GM12878 (cell line): ENCODE measurements at regions of chr12 and their contacts with region 1.

Region 1: DNA sequence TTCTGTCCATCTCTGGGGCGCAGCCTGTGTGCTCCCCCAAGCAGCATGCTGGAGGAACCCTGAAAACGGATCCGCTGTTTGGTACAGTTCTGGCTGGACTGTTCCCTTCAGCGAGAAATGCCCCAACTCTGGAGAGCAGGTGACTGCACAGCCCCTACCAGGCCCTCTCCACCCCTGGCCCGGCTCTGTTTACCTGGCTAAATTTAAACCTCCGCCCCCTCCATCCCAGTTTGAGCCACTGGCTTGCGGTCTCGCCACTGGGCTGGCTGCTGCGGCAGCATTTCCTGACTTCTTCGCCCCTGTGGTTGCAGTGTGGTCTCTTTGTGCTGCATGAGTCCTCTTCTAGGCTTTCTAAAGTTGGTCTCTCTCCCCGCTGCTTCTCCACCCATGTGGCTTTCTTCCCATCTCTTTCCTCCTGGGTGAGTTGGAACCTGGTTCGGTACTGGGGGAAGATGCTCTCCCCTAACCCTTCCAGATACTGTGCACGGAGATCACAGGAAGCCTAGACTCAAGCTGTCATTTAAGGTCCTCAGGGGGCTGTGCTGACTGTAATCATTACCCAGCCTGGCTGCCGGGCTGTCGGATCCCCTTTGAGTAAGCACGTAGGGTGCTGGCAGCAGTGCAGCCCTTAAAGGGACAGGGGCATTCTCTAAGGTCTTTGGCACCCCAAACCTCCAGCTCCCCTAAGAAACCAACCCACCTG is 60.6 kb downstream of the FBXL14 start:
- DNase-seq: peak; percentile 77
- ATAC-seq: peak; percentile 80
- H3K4me3 ChIP-seq: peak overlapping the region; percentile 66
- H3K27ac ChIP-seq: peak overlapping the region; percentile 81
- H3K4me1 ChIP-seq: peaks cover 37% of the 10 kb centered on the region
- H3K27me3 ChIP-seq: peaks cover 0 to 5% of the 10 kb centered on the region in 2 experiments; a peak in 1 of 4 replicates
- CTCF ChIP-seq: no peak
- EP300 ChIP-seq: peak; percentile 54 to 58; a peak in 3 of 4 replicates
- POLR2A ChIP-seq: no peak
- RAD21 ChIP-seq: no peak

Region 2: GRCh38 chr12:1220127-1221092 is 313.3 kb before region 1 on chr12:
- CTCF ChIA-PET with region 1: no interaction called
- POLR2A ChIA-PET with region 1: no interaction called
- RAD21 ChIA-PET with region 1: no interaction called
- SMC1A ChIA-PET with region 1: no interaction called
- in situ Hi-C with region 1: no loop called
- intact Hi-C with region 1: no loop called
- DNase-seq: no peak
- ATAC-seq: no peak
- H3K4me3 ChIP-seq: no peak overlapping the region
- H3K27ac ChIP-seq: no peak overlapping the region
- H3K4me1 ChIP-seq: no peaks in the 10 kb centered on the region
- H3K27me3 ChIP-seq: no peaks in the 10 kb centered on the region
- CTCF ChIP-seq: no peak
- EP300 ChIP-seq: no peak
- POLR2A ChIP-seq: no peak
- RAD21 ChIP-seq: no peak

Region 3: GRCh38 chr12:1422604-1423315 is 111.0 kb before region 1 on chr12:
- CTCF ChIA-PET with region 1: no interaction called
- POLR2A ChIA-PET with region 1: interaction called, 3 read pairs
- RAD21 ChIA-PET with region 1: interaction called, 4 read pairs
- SMC1A ChIA-PET with region 1: interaction called, 6 read pairs
- in situ Hi-C with region 1: no loop called
- intact Hi-C with region 1: loop called (anchors 5 kb)
- DNase-seq: peak; percentile 83
- ATAC-seq: peak; percentile 98
- H3K4me3 ChIP-seq: no peak overlapping the region
- H3K27ac ChIP-seq: peak overlapping the region; percentile 75
- H3K4me1 ChIP-seq: no peaks in the 10 kb centered on the region
- H3K27me3 ChIP-seq: no peaks in the 10 kb centered on the region
- CTCF ChIP-seq: no peak
- EP300 ChIP-seq: peak; percentile 46 to 57; a peak in 3 of 4 replicates
- POLR2A ChIP-seq: no peak
- RAD21 ChIP-seq: no peak

Region 4: DNA sequence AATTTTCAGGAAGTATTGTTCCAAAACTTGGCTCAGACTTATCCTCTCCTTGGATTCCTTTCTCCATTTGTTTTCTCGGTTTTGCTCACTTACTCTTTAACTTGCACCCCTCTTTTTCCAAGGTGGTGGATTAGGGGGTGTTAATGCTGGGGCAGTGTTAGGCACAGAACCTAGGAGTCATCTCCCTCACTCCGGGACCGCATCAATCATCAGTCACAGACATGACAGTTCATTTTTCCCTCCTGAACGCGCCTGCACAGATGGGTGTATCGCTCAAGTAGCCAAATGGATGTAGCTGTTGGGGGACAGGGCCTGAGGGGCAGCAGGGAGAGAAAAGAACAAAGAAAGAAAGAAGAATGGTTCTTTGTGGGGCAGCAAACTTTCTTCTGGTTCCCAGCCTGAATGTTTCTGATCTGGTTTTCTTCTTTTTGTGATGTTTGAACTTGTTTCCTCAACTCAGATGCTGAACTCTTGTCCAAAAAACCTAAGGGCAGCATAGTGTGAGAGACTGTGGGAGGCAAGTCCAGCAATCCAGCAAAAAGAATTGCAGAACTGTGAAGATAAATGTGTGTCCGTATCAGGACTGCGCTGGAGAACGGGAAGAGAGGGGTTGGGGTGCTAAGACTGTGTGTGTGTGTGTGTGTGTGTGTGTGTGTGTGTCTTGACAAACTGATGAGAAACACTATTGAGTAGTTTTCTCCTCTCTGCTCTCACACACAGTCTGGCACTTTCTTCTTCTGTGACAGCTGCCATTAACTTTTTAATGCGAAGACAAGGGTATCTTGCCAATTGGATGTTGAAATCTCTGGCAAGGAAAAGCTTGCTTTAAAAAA is 70.5 kb before region 1 on chr12:
- CTCF ChIA-PET with region 1: no interaction called
- POLR2A ChIA-PET with region 1: no interaction called
- RAD21 ChIA-PET with region 1: no interaction called
- SMC1A ChIA-PET with region 1: no interaction called
- in situ Hi-C with region 1: no loop called
- intact Hi-C with region 1: no loop called
- DNase-seq: no peak
- ATAC-seq: no peak
- H3K4me3 ChIP-seq: no peak overlapping the region
- H3K27ac ChIP-seq: no peak overlapping the region
- H3K4me1 ChIP-seq: no peaks in the 10 kb centered on the region
- H3K27me3 ChIP-seq: no peaks in the 10 kb centered on the region
- CTCF ChIP-seq: no peak
- EP300 ChIP-seq: no peak
- POLR2A ChIP-seq: no peak
- RAD21 ChIP-seq: no peak

Region 5: GRCh38 chr12:1517007-1517406 is 16.7 kb before region 1 on chr12:
- CTCF ChIA-PET with region 1: interaction called, 14 read pairs
- POLR2A ChIA-PET with region 1: no interaction called
- RAD21 ChIA-PET with region 1: interaction called, 10 read pairs
- SMC1A ChIA-PET with region 1: interaction called, 6 read pairs
- in situ Hi-C with region 1: no loop called
- intact Hi-C with region 1: no loop called
- DNase-seq: no peak
- ATAC-seq: peak; percentile 83
- H3K4me3 ChIP-seq: no peak overlapping the region
- H3K27ac ChIP-seq: no peak overlapping the region
- H3K4me1 ChIP-seq: no peaks in the 10 kb centered on the region
- H3K27me3 ChIP-seq: no peaks in the 10 kb centered on the region
- CTCF ChIP-seq: peak; percentile 50 to 78 (median 71)
- EP300 ChIP-seq: no peak
- POLR2A ChIP-seq: no peak
- RAD21 ChIP-seq: peak; percentile 69

Region 6: DNA sequence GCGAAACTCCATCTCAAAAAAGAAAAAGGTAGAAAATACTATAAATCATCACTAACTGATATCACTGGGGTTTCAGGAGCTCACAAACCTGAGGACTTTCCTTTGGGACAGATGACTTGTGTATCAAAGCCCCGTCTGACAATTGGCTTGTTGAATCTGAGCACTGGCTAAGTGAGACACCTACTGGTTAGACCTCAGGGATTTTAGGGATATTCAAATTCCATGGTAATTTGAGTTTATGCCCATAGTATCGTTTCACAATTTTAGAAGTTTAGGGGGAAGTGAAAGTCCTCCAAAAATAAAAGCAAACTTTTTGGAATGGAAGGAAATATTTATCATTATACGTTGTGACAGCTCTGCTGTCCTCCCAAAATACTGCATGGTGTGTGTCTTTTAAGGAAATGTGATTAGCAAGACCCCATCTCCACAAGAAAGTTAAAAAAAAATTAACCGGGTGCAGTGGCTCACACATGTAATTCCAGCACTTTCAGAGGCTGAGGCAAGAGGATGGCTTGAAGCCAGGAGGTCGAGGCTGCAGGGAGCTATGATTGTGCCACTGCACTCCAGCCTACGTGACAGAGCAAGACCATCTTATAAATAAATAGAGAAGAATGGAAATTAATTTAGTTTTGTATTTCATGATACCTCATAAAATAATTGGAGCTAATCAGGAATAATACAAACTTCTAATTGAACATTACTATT is 11.4 kb after region 1 on chr12:
- CTCF ChIA-PET with region 1: interaction called, 6 read pairs
- POLR2A ChIA-PET with region 1: interaction called, 9 read pairs
- RAD21 ChIA-PET with region 1: interaction called, 3 read pairs
- SMC1A ChIA-PET with region 1: interaction called, 45 read pairs
- in situ Hi-C with region 1: no loop called
- intact Hi-C with region 1: no loop called
- DNase-seq: no peak
- ATAC-seq: no peak
- H3K4me3 ChIP-seq: no peak overlapping the region
- H3K27ac ChIP-seq: no peak overlapping the region
- H3K4me1 ChIP-seq: peaks cover 15% of the 10 kb centered on the region; the same call in 1 of the 2 replicates
- H3K27me3 ChIP-seq: no peaks in the 10 kb centered on the region
- CTCF ChIP-seq: peak in 1 of 3 experiments; percentile 11; a peak in 1 of 6 replicates
- EP300 ChIP-seq: no peak
- POLR2A ChIP-seq: no peak
- RAD21 ChIP-seq: peak; percentile 30; the same call in 1 of the 2 replicates

Region 7: DNA sequence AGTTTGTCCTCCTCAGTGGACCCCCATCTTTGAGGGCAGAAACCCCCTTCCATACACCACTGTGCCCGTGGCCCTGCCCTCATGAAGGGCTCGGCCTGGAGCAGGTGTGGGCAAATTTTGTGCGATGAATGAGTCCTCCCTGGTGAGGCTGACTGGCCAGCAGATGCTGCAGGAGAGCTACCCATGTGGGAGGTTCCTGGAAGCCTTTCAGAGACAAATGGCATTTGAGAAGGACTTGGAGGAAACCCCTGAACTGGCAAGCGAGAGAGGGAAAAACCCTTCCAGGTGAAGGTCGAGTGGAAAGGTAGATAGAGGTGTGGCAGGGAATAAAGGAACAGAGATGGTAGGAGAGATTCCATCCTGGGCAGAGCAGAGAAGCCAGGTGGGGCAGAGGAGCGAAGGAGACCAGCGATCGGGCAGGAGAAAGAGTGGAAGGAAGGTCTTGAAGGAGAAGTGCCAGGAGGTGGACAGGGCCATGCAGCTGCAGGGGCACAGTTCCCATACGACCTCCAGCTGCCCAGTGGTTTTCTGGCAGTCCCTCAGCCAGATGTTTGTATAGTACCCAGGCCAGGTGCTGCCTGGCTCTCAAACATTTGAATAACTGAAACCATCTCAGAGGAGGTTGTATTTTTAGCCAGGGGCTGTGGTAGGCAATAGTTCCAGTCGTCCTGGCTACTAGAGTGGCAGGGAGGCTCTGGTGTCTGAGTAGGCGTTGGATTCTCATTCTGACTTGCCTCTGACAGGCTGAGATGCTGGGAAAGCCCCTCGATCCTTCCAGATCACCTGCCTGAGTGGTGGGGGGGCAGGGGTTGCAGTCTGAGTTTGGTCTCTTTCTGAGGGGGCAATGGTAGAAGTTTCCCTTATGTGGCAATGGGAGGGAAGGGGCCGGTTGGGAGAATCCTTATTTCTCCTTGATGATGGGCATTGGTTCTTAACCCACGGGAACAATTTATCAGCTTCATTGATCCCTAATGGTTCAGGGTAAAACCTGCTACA is 20.5 kb after region 1 on chr12:
- CTCF ChIA-PET with region 1: interaction called, 28 read pairs
- POLR2A ChIA-PET with region 1: interaction called, 43 read pairs
- RAD21 ChIA-PET with region 1: interaction called, 43 read pairs
- SMC1A ChIA-PET with region 1: interaction called, 20 read pairs
- in situ Hi-C with region 1: no loop called
- intact Hi-C with region 1: loop called (anchors 1 kb)
- DNase-seq: peak; percentile 94
- ATAC-seq: peak; percentile 96
- H3K4me3 ChIP-seq: peak overlapping the region; percentile 24; the same call in 1 of the 2 replicates
- H3K27ac ChIP-seq: peak overlapping the region; percentile 82
- H3K4me1 ChIP-seq: peaks cover 20% of the 10 kb centered on the region
- H3K27me3 ChIP-seq: no peaks in the 10 kb centered on the region
- CTCF ChIP-seq: peak in 1 of 3 experiments; percentile 6; a peak in 1 of 6 replicates
- EP300 ChIP-seq: peak; percentile 94 to 96
- POLR2A ChIP-seq: peak; percentile 45; the same call in 1 of the 2 replicates
- RAD21 ChIP-seq: peak; percentile 25

Region 8: GRCh38 chr12:1576410-1577241 is 42.9 kb after region 1 on chr12:
- CTCF ChIA-PET with region 1: interaction called, 55 read pairs
- POLR2A ChIA-PET with region 1: interaction called, 4 read pairs
- RAD21 ChIA-PET with region 1: interaction called, 55 read pairs
- SMC1A ChIA-PET with region 1: interaction called, 56 read pairs
- in situ Hi-C with region 1: no loop called
- intact Hi-C with region 1: no loop called
- DNase-seq: no peak
- ATAC-seq: no peak
- H3K4me3 ChIP-seq: no peak overlapping the region
- H3K27ac ChIP-seq: no peak overlapping the region
- H3K4me1 ChIP-seq: no peaks in the 10 kb centered on the region
- H3K27me3 ChIP-seq: no peaks in the 10 kb centered on the region
- CTCF ChIP-seq: no peak
- EP300 ChIP-seq: no peak
- POLR2A ChIP-seq: no peak
- RAD21 ChIP-seq: no peak

Region 9: DNA sequence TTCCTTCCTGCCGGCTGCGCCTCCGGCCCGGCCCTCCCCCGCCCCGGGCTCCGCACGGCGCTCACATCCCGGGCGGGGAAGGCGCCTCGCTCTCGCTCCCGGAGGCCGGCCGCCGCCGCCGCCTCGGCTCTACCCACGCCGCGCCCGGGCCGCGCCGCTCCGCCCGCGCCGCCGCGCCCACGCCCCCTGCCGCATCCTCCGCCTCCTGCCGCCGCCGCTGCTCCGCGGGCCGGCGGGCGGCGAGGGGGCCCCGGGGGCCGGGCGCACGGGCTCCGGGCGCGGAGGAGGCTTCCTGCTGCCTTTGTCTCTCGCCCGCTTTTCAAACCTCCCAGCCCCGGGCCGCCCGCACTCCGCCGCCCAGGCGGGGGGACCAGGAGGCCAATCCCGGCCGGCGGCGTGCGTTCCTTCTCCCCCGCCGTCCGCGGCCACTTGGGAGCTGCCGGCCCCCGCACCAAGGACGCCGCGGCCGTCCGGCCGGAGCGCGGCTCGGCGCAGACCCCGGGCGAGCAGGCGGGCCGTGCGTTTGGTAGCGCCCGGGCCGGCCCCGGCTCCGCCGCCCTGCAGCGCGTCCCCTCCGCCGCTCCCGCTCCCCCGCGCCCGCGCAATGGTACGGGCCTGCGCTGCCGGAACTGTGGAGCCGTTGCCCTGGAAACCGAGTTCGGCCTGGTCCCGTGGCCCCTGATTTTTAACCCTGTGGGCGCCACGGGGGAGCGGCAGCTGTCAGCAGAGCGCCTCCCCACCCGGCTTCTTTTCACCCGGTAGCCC is 60.7 kb after region 1 on chr12 and contains the start of gene FBXL14:
- CTCF ChIA-PET with region 1: interaction called, 5 read pairs
- POLR2A ChIA-PET with region 1: interaction called, 9 read pairs
- RAD21 ChIA-PET with region 1: interaction called, 6 read pairs
- SMC1A ChIA-PET with region 1: interaction called, 22 read pairs
- in situ Hi-C with region 1: no loop called
- intact Hi-C with region 1: no loop called
- DNase-seq: no peak
- ATAC-seq: peak; percentile 66
- H3K4me3 ChIP-seq: peak within 1 kb of the TSS; percentile 97
- H3K27ac ChIP-seq: peak within 1 kb of the TSS; percentile 34
- H3K4me1 ChIP-seq: peaks cover 11% of the 10 kb centered on the region
- H3K27me3 ChIP-seq: no peaks in the 10 kb centered on the region
- CTCF ChIP-seq: no peak
- EP300 ChIP-seq: no peak
- POLR2A ChIP-seq: peak; percentile 55
- RAD21 ChIP-seq: no peak
- polyA plus RNA-seq, gene FBXL14: 0.44 to 0.64 TPM